CD4-positive, alpha-beta memory T cell (primary cell): ENCODE measurements at regions of chr16 and their contacts with region 1.

Region 1: GRCh38 chr16:77171745-77172635 is 19.0 kb upstream of the MON1B start:
- DNase-seq: peak in 4 of 5 donors; percentile 34 to 41 (median 38)
- H3K4me3 ChIP-seq: no peak overlapping the region
- H3K4me3 Mint-ChIP-seq: no peak overlapping the region
- H3K27ac ChIP-seq: no peak overlapping the region
- H3K27ac Mint-ChIP-seq: no peak overlapping the region
- H3K4me1 ChIP-seq: no peaks in the 10 kb centered on the region
- H3K4me1 Mint-ChIP-seq: no peaks in the 10 kb centered on the region
- H3K27me3 ChIP-seq: peaks cover 8% of the 10 kb centered on the region
- H3K27me3 Mint-ChIP-seq: peaks cover 30 to 34% of the 10 kb centered on the region in 2 donors

Region 2: GRCh38 chr16:75789237-75789636 is 1382.8 kb before region 1 on chr16:
- CTCF ChIA-PET with region 1: interaction called, 26 read pairs
- POLR2A ChIA-PET with region 1: no interaction called
- intact Hi-C with region 1: no loop called
- DNase-seq: peak in 4 of 5 donors; percentile 33 to 40 (median 36)
- H3K4me3 ChIP-seq: no peak overlapping the region
- H3K4me3 Mint-ChIP-seq: peak overlapping the region in 1 of 8 donors; percentile 33
- H3K27ac ChIP-seq: no peak overlapping the region
- H3K27ac Mint-ChIP-seq: no peak overlapping the region
- H3K4me1 ChIP-seq: no peaks in the 10 kb centered on the region
- H3K4me1 Mint-ChIP-seq: no peaks in the 10 kb centered on the region
- H3K27me3 ChIP-seq: no peaks in the 10 kb centered on the region
- H3K27me3 Mint-ChIP-seq: peaks cover 12 to 18% of the 10 kb centered on the region in 2 donors

Region 3: GRCh38 chr16:77157346-77158058 is 14.5 kb before region 1 on chr16:
- CTCF ChIA-PET with region 1: interaction called, 24 read pairs
- POLR2A ChIA-PET with region 1: no interaction called
- intact Hi-C with region 1: no loop called
- DNase-seq: no peak
- H3K4me3 ChIP-seq: no peak overlapping the region
- H3K4me3 Mint-ChIP-seq: no peak overlapping the region
- H3K27ac ChIP-seq: no peak overlapping the region
- H3K27ac Mint-ChIP-seq: no peak overlapping the region
- H3K4me1 ChIP-seq: no peaks in the 10 kb centered on the region
- H3K4me1 Mint-ChIP-seq: no peaks in the 10 kb centered on the region
- H3K27me3 ChIP-seq: no peaks in the 10 kb centered on the region
- H3K27me3 Mint-ChIP-seq: peaks cover 15 to 32% of the 10 kb centered on the region in 2 donors

Region 4: GRCh38 chr16:77183137-77183536 is 11.1 kb after region 1 on chr16:
- CTCF ChIA-PET with region 1: interaction called, 20 read pairs
- POLR2A ChIA-PET with region 1: no interaction called
- intact Hi-C with region 1: no loop called
- DNase-seq: no peak
- H3K4me3 ChIP-seq: no peak overlapping the region
- H3K4me3 Mint-ChIP-seq: no peak overlapping the region
- H3K27ac ChIP-seq: no peak overlapping the region
- H3K27ac Mint-ChIP-seq: no peak overlapping the region
- H3K4me1 ChIP-seq: no peaks in the 10 kb centered on the region
- H3K4me1 Mint-ChIP-seq: no peaks in the 10 kb centered on the region
- H3K27me3 ChIP-seq: no peaks in the 10 kb centered on the region
- H3K27me3 Mint-ChIP-seq: peaks cover 7 to 12% of the 10 kb centered on the region in 2 donors